Activated CD4-positive, alpha-beta memory T cell treated with anti-CD3 and anti-CD28 coated beads for 36 hours (primary cell): ENCODE measurements at regions of chr16 and their contacts with region 1.

Region 1: GRCh38 chr16:69796351-69797118 is 34.4 kb downstream of the WWP2 start:
- DNase-seq: peak; percentile 25
- H3K4me3 Mint-ChIP-seq: no peak overlapping the region
- H3K27ac Mint-ChIP-seq: no peak overlapping the region
- H3K4me1 Mint-ChIP-seq: no peaks in the 10 kb centered on the region
- H3K27me3 Mint-ChIP-seq: no peaks in the 10 kb centered on the region

Region 2: GRCh38 chr16:69812688-69813014 is 16.1 kb after region 1 on chr16:
- CTCF ChIA-PET with region 1: interaction called, 20 read pairs
- POLR2A ChIA-PET with region 1: interaction called, 3 read pairs
- intact Hi-C with region 1: no loop called
- DNase-seq: no peak
- H3K4me3 Mint-ChIP-seq: no peak overlapping the region
- H3K27ac Mint-ChIP-seq: no peak overlapping the region
- H3K4me1 Mint-ChIP-seq: no peaks in the 10 kb centered on the region
- H3K27me3 Mint-ChIP-seq: no peaks in the 10 kb centered on the region

Region 3: GRCh38 chr16:69839798-69840409 is 43.4 kb after region 1 on chr16:
- CTCF ChIA-PET with region 1: no interaction called
- POLR2A ChIA-PET with region 1: no interaction called
- intact Hi-C with region 1: no loop called
- DNase-seq: no peak
- H3K4me3 Mint-ChIP-seq: no peak overlapping the region
- H3K27ac Mint-ChIP-seq: no peak overlapping the region
- H3K4me1 Mint-ChIP-seq: no peaks in the 10 kb centered on the region
- H3K27me3 Mint-ChIP-seq: no peaks in the 10 kb centered on the region

Region 4: DNA sequence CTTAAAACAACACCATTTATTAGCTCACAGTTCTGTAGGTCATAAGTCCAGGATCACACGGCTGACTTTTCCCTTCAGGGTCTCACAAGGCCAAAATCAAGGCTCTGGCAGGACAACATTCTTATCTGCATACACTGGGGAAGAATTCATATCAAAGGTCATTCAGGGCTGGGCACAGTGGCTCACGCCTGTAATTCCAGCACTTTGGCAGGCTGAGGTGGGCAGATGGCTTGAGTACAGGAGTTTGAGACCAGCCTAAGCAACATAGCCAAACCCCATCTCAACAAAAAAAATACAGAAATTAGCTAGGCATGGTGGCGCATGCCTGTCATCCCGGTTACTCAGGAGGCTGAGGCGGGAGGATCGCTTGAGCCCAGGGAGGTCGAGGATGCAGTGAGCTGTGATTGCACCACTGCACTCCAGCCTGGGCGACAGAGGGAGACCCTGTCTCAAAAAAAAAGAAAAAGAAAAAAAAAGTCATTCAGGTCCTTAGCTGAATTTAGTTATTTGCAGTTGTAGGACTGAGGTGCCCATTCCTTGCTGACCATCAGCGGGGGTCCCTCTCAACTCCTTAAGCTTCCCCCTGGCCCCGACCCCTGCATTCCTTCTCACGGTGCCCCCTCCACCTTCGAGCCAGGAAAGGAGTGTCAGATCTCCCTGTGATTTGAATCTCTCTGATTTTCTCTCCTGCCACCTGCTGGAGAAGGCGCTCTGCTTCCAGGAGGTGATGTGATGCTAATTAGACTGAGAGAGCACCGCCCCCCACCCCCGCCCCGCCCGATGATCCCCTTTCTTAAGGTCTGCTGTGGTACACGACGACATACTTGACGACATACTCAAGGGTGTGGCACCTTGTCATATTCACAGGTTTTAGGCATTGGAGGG is 62.8 kb after region 1 on chr16:
- CTCF ChIA-PET with region 1: no interaction called
- POLR2A ChIA-PET with region 1: no interaction called
- intact Hi-C with region 1: loop called (anchors 2 kb)
- DNase-seq: peak; percentile 18
- H3K4me3 Mint-ChIP-seq: no peak overlapping the region
- H3K27ac Mint-ChIP-seq: no peak overlapping the region
- H3K4me1 Mint-ChIP-seq: no peaks in the 10 kb centered on the region
- H3K27me3 Mint-ChIP-seq: no peaks in the 10 kb centered on the region